ENCODE measurements at regions of chr20 and their contacts with region 1.

Region 1: GRCh38 chr20:31712564-31713311 is 9.9 kb downstream of the BCL2L1 start:
- DNase-seq: peak; percentile 84
- ATAC-seq: peak; percentile 90 to 93
- H3K4me3 ChIP-seq: peak overlapping the region; percentile 37
- H3K27ac ChIP-seq: peak overlapping the region; percentile 93
- H3K4me1 ChIP-seq: peaks cover 96% of the 10 kb centered on the region
- H3K27me3 ChIP-seq: no peaks in the 10 kb centered on the region
- CTCF ChIP-seq: no peak

Region 2: GRCh38 chr20:31661625-31662371 is 50.9 kb before region 1 on chr20:
- intact Hi-C with region 1: loop called (anchors 10 kb)
- DNase-seq: peak; percentile 88
- ATAC-seq: peak; percentile 90 to 92
- H3K4me3 ChIP-seq: peak overlapping the region; percentile 51
- H3K27ac ChIP-seq: peak overlapping the region; percentile 67
- H3K4me1 ChIP-seq: peaks cover 51% of the 10 kb centered on the region
- H3K27me3 ChIP-seq: no peaks in the 10 kb centered on the region
- CTCF ChIP-seq: peak; percentile 81

Measured in lower lobe of right lung (tissue), 2 donors.